IMR-90 (cell line): ENCODE measurements at regions of chr5 and their contacts with region 1.

Region 1: DNA sequence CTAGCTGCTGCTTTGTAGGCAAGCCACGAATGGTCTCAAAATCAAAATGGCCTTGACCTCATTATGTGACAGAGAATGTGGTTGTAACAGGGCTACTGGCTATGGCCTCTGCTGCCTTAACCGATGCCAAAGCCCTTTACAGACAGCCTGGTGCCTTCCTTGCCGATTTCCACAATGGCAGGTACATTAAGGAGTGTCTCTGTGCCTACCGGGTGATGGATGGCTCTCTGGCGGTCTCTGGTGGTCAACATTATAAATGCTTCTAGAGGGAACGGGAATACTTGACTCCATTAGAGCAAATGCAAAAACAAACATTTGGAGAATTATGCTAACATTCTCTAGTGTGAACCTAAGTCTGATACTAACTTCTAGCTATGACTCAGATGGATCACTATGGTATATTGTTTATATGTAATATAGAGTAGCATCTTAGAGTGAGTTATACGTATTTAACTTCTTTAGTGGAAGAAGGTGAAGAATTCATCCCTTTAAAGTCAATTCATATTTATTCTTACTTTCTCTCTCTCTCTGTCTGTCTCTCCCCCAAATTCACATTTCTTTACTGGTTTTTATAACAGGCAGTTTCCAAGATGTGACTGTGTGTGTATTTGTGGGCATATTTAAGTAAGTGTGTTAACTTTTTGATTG is 52.5 kb downstream of the RPS23 start:
- DNase-seq: peak; percentile 85
- ATAC-seq: peak; percentile 96
- H3K4me3 ChIP-seq: no peak overlapping the region
- H3K27ac ChIP-seq: no peak overlapping the region; the same call in 1 of the 2 replicates
- H3K4me1 ChIP-seq: peaks cover 2% of the 10 kb centered on the region; the same call in 1 of the 2 replicates
- H3K27me3 ChIP-seq: no peaks in the 10 kb centered on the region
- CTCF ChIP-seq: peak; percentile 93
- POLR2A ChIP-seq: no peak
- RAD21 ChIP-seq: peak; percentile 89

Region 2: DNA sequence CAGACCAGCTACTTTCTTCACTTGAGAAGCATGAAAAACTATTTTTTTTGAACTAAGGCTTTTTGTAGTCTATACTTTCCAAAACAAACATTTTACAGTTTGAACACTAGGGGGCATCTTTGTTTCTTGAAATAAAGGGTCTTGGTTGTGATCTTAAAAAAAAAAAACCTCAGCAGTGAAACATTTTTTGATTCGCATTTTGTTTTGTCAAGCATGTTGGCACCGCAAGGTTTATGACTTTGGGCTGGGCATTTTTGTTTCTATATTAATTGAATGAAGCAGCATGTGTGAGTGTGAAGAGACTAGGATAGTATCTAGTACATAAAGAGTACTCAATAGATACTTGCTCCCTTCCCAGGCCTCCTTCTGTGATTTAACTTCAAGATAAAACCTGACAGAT is 800.1 kb before region 1 on chr5:
- CTCF ChIA-PET with region 1: interaction called, 7 read pairs
- POLR2A ChIA-PET with region 1: no interaction called
- dilution Hi-C with region 1: no loop called
- in situ Hi-C with region 1: no loop called
- intact Hi-C with region 1: loop called (anchors 1 kb)
- DNase-seq: peak; percentile 65
- ATAC-seq: no peak
- H3K4me3 ChIP-seq: no peak overlapping the region
- H3K27ac ChIP-seq: peak overlapping the region; percentile 42; the same call in 1 of the 2 replicates
- H3K4me1 ChIP-seq: peaks cover 21% of the 10 kb centered on the region
- H3K27me3 ChIP-seq: no peaks in the 10 kb centered on the region
- CTCF ChIP-seq: peak; percentile 57
- POLR2A ChIP-seq: no peak
- RAD21 ChIP-seq: peak; percentile 61

Region 3: GRCh38 chr5:82011761-82012160 is 213.9 kb before region 1 on chr5:
- CTCF ChIA-PET with region 1: no interaction called
- POLR2A ChIA-PET with region 1: no interaction called
- dilution Hi-C with region 1: no loop called
- in situ Hi-C with region 1: no loop called
- intact Hi-C with region 1: no loop called
- DNase-seq: peak; percentile 49
- ATAC-seq: peak; percentile 68
- H3K4me3 ChIP-seq: no peak overlapping the region
- H3K27ac ChIP-seq: no peak overlapping the region
- H3K4me1 ChIP-seq: peaks cover 2% of the 10 kb centered on the region; the same call in 1 of the 2 replicates
- H3K27me3 ChIP-seq: no peaks in the 10 kb centered on the region
- CTCF ChIP-seq: no peak
- POLR2A ChIP-seq: no peak
- RAD21 ChIP-seq: no peak

Region 4: GRCh38 chr5:82107267-82107666 is 118.4 kb before region 1 on chr5:
- CTCF ChIA-PET with region 1: interaction called, 7 read pairs
- POLR2A ChIA-PET with region 1: no interaction called
- dilution Hi-C with region 1: no loop called
- in situ Hi-C with region 1: no loop called
- intact Hi-C with region 1: loop called (anchors 1 kb)
- DNase-seq: peak; percentile 19
- ATAC-seq: peak; percentile 64
- H3K4me3 ChIP-seq: no peak overlapping the region
- H3K27ac ChIP-seq: no peak overlapping the region
- H3K4me1 ChIP-seq: no peaks in the 10 kb centered on the region
- H3K27me3 ChIP-seq: no peaks in the 10 kb centered on the region
- CTCF ChIP-seq: peak; percentile 41
- POLR2A ChIP-seq: no peak
- RAD21 ChIP-seq: 0 out of 2 replicates have a peak, but pooled peaks have one; percentile 19

Region 5: DNA sequence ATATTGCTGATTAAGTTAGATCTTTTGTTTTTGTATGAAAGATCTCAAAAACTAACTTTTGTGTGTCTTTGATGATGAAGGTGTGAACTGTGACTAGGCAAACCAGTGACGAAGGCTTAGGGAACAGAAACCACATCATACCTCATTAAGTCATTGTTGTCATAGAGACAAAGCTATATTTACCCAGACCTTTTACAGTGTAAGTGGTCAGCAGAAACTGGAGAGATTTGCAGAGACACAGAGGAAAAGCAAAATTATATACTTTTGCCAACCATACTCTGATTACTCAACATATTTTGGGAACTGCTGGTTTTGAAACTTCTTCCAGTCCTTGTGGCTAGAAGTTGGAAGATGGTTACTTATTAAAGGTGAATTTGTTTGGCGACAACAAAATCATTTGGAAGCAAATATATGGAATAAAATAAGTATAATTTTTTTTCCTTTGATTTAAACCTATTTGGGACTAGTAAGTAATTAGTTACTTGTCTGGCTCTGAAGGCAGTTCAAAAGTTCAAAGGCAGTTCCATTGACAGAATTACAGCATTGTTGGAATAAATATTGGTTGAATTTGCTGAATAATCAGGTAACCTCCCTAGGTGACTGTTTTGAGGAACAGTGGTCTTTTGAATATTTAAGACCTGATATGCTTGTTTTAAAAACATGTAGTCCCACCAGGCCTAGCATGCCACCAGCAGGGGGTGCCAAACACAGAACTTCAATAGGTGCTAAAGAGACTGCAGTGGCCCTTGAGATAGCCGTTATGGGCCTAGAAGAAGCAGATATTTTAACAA is 51.3 kb before region 1 on chr5:
- CTCF ChIA-PET with region 1: interaction called, 6 read pairs
- POLR2A ChIA-PET with region 1: no interaction called
- dilution Hi-C with region 1: no loop called
- in situ Hi-C with region 1: no loop called
- intact Hi-C with region 1: loop called (anchors 1 kb)
- DNase-seq: peak; percentile 85
- ATAC-seq: peak; percentile 80
- H3K4me3 ChIP-seq: no peak overlapping the region
- H3K27ac ChIP-seq: no peak overlapping the region
- H3K4me1 ChIP-seq: peaks cover 2% of the 10 kb centered on the region; the same call in 1 of the 2 replicates
- H3K27me3 ChIP-seq: no peaks in the 10 kb centered on the region
- CTCF ChIP-seq: peak; percentile 44
- POLR2A ChIP-seq: no peak
- RAD21 ChIP-seq: no peak

Region 6: GRCh38 chr5:82777106-82777505 is 551.5 kb after region 1 on chr5:
- CTCF ChIA-PET with region 1: no interaction called
- POLR2A ChIA-PET with region 1: no interaction called
- dilution Hi-C with region 1: no loop called
- in situ Hi-C with region 1: no loop called
- intact Hi-C with region 1: no loop called
- DNase-seq: no peak
- ATAC-seq: no peak
- H3K4me3 ChIP-seq: no peak overlapping the region
- H3K27ac ChIP-seq: no peak overlapping the region
- H3K4me1 ChIP-seq: no peaks in the 10 kb centered on the region
- H3K27me3 ChIP-seq: no peaks in the 10 kb centered on the region; the same call in 1 of the 2 replicates
- CTCF ChIP-seq: no peak
- POLR2A ChIP-seq: no peak
- RAD21 ChIP-seq: no peak